ENCODE measurements at regions of chr1 and their contacts with region 1.

Region 1: GRCh38 chr1:116485071-116485735 is 85.6 kb downstream of the CD58 start:
- DNase-seq: peak; percentile 88
- H3K4me3 Mint-ChIP-seq: no peak overlapping the region
- H3K27ac Mint-ChIP-seq: no peak overlapping the region
- H3K4me1 Mint-ChIP-seq: peaks cover 6% of the 10 kb centered on the region
- H3K27me3 Mint-ChIP-seq: peaks cover 3% of the 10 kb centered on the region

Region 2: GRCh38 chr1:116133696-116134650 is 351.2 kb before region 1 on chr1:
- CTCF ChIA-PET with region 1: interaction called, 99 read pairs
- POLR2A ChIA-PET with region 1: no interaction called
- DNase-seq: no peak
- H3K4me3 Mint-ChIP-seq: no peak overlapping the region
- H3K27ac Mint-ChIP-seq: no peak overlapping the region
- H3K4me1 Mint-ChIP-seq: peaks cover 14% of the 10 kb centered on the region
- H3K27me3 Mint-ChIP-seq: peaks cover 6% of the 10 kb centered on the region

Region 3: GRCh38 chr1:116139592-116140134 is 345.5 kb before region 1 on chr1:
- CTCF ChIA-PET with region 1: interaction called, 99 read pairs
- POLR2A ChIA-PET with region 1: no interaction called
- DNase-seq: no peak
- H3K4me3 Mint-ChIP-seq: no peak overlapping the region
- H3K27ac Mint-ChIP-seq: no peak overlapping the region
- H3K4me1 Mint-ChIP-seq: peaks cover 6% of the 10 kb centered on the region
- H3K27me3 Mint-ChIP-seq: peaks cover 6% of the 10 kb centered on the region

Region 4: DNA sequence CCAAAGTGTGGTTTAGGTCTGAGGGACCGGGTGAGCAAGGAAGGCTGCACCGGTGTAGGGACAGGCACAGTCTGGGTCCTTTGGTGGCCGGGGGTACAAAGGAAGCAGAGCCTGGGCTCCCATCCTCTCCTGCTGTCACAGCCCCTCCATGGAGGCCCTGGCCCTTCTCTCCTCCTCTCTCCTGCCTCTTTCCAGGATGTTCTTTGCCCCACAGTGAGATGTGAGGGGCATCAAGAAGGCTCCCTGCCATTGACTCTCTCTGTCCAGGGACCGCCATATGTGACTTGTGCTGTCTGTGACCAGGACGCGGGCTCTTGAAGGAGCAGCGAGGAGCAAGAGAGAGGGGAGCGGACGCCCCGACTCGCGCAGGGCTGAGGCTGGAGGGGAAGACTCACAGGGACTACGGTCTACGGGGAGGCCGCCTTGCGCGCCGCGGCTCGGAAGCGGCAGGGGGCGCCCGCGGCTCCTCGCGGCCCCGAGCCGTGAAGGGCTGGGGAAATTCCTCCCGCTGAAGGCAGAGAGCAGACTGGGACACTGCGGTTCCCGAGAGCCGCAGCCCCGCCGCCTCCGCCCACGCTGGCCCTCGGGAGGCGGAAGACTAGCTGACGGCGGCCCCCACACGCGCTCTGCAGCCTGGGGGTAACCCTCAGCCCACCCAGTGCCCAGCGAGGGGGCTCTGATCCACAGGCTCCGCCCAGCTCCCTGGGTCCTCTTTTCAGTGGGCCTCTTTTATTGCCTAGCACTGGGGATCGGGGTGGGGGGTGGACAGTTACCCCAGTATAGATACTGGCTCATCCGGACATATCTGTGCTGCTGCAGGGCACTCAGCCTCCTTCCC is 333.2 kb before region 1 on chr1:
- CTCF ChIA-PET with region 1: interaction called, 13 read pairs
- POLR2A ChIA-PET with region 1: no interaction called
- DNase-seq: peak; percentile 69
- H3K4me3 Mint-ChIP-seq: peak overlapping the region; percentile 43
- H3K27ac Mint-ChIP-seq: peak overlapping the region; percentile 71
- H3K4me1 Mint-ChIP-seq: peaks cover 18% of the 10 kb centered on the region
- H3K27me3 Mint-ChIP-seq: peaks cover 19% of the 10 kb centered on the region

Region 5: GRCh38 chr1:116365353-116365780 is 119.8 kb before region 1 on chr1:
- CTCF ChIA-PET with region 1: interaction called, 20 read pairs
- POLR2A ChIA-PET with region 1: no interaction called
- DNase-seq: no peak
- H3K4me3 Mint-ChIP-seq: no peak overlapping the region
- H3K27ac Mint-ChIP-seq: no peak overlapping the region
- H3K4me1 Mint-ChIP-seq: peaks cover 5% of the 10 kb centered on the region
- H3K27me3 Mint-ChIP-seq: peaks cover 13% of the 10 kb centered on the region

Region 6: GRCh38 chr1:116472431-116472961 is 12.7 kb before region 1 on chr1:
- CTCF ChIA-PET with region 1: interaction called, 17 read pairs
- POLR2A ChIA-PET with region 1: no interaction called
- DNase-seq: no peak
- H3K4me3 Mint-ChIP-seq: no peak overlapping the region
- H3K27ac Mint-ChIP-seq: no peak overlapping the region
- H3K4me1 Mint-ChIP-seq: no peaks in the 10 kb centered on the region
- H3K27me3 Mint-ChIP-seq: no peaks in the 10 kb centered on the region

Region 7: GRCh38 chr1:116498789-116499628 is 13.8 kb after region 1 on chr1:
- CTCF ChIA-PET with region 1: interaction called, 54 read pairs
- POLR2A ChIA-PET with region 1: no interaction called
- DNase-seq: peak; percentile 67
- H3K4me3 Mint-ChIP-seq: no peak overlapping the region
- H3K27ac Mint-ChIP-seq: no peak overlapping the region
- H3K4me1 Mint-ChIP-seq: peaks cover 52% of the 10 kb centered on the region
- H3K27me3 Mint-ChIP-seq: no peaks in the 10 kb centered on the region

Measured in activated CD4-positive, alpha-beta T cell treated with anti-CD3 and anti-CD28 coated beads, Interleukin-2, amount 10 ng/mL, durations not matched to agents 7 days and 5 days (primary cell).